Heart left ventricle (tissue), 16 donors: ENCODE measurements at regions of chr10 and their contacts with region 1.

Region 1: DNA sequence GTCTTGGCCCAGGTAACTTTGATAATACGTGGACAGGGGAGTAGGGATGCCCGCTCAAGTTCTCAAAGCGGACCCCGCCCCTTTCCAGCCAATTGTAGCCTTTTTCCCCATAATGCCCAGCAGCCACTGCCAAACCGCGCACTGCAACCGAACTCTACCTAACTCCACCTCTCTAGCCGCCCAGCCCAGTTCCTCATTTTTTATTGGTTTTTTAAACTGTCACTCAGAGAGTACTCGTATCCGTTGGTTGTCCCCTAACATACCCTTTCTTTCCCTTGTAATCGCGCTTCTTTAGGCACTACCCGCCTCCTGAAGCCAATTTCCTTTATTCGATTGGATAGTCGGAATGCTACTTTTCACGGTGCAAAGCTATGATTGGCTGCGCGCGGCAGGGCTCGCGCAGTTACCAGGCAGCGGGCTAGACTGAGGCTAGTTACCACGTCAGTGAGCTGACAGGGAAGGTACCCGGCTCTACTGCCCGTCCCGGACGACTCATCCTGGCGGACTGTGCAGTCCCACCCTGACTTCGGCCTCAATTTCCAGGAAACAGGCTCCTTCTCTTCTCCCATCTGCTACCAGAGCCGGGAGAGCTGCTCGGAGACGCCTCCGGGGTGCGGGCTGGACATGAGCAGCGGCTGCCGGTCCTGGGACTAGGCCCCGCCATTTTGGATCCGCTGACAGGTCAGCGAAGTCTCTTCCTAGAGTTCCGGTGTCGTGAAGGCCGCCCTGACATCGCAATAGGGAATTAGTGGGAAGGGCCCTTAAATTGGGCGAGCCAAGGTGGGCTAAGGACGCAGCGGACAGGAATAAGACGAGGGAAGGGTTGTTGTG is at the start of gene GBF1:
- DNase-seq: peak; percentile 92 to 94 (median 94)
- ATAC-seq: peak; percentile 88 to 94 (median 93)
- H3K4me3 ChIP-seq: peak within 1 kb of the TSS; percentile 69 to 93 (median 79)
- H3K27ac ChIP-seq: peak within 1 kb of the TSS; percentile 66 to 97 (median 88)
- H3K4me1 ChIP-seq: peaks cover 0 to 68% (median 46%) of the 10 kb centered on the region in 12 donors
- H3K27me3 ChIP-seq: peaks cover 0 to 10% (median 0%) of the 10 kb centered on the region in 9 donors
- CTCF ChIP-seq: no peak
- POLR2A ChIP-seq: peak; percentile 98 to 99
- total RNA-seq, gene GBF1: 39.9 to 70.0 (median 48.3) TPM

Region 2: DNA sequence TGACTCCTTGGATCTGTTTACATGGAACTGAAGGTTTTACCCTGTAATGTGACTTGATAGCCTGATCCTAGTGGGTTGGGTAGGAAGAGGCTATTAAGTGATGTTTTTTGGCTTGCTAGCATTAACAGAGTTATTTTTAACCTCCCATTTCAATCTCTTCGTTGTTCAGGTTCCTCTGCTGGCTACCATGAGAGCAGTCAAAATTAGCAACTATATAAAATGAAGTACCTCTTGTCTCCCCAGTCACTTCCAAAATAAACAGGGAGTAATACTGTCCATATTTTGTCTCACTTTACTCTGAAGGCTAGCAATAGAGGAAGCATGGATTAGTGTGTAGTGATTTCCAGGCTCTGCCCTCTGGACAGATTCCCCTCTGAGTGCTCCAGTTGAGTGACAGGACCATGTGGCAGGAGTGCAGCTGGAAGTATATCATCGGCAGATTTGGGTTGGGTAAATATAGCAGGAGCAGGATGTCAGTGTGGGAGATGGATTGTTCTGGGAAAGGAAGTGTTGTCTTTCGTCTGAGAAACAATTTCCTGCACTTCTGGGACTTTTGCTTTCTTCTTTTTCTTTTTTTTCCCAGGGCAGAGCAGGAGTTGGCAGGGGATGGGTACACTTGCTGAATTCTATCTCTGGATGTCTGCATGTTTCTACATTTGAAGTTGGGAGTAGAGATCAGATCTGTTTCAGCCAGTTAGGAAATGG is 35.2 kb after region 1 on chr10:
- intact Hi-C with region 1: loop called in 5 of 10 experiments (anchors 5 kb)
- DNase-seq: peak in 4 of 5 donors; percentile 61 to 67 (median 64)
- ATAC-seq: peak; percentile 88 to 97 (median 92)
- H3K4me3 ChIP-seq: peak overlapping the region in 10 of 12 donors; percentile 3 to 50 (median 28)
- H3K27ac ChIP-seq: peak overlapping the region; percentile 42 to 93 (median 84)
- H3K4me1 ChIP-seq: peaks cover 0 to 71% (median 55%) of the 10 kb centered on the region in 12 donors
- H3K27me3 ChIP-seq: no peaks in the 10 kb centered on the region
- CTCF ChIP-seq: no peak
- POLR2A ChIP-seq: peak in 1 of 2 donors; percentile 24

Region 3: GRCh38 chr10:102334101-102334500 is 88.8 kb after region 1 on chr10:
- intact Hi-C with region 1: loop called in 1 of 10 experiments (anchors 5 kb)
- DNase-seq: peak; percentile 45 to 74 (median 63)
- ATAC-seq: peak; percentile 87 to 94 (median 90)
- H3K4me3 ChIP-seq: no peak overlapping the region
- H3K27ac ChIP-seq: peak overlapping the region in 10 of 12 donors; percentile 59 to 78 (median 74)
- H3K4me1 ChIP-seq: peaks cover 0 to 48% (median 20%) of the 10 kb centered on the region in 12 donors
- H3K27me3 ChIP-seq: no peaks in the 10 kb centered on the region
- CTCF ChIP-seq: no peak
- POLR2A ChIP-seq: no peak